ENCODE measurements at regions of chr12 and their contacts with region 1.

Region 1: DNA sequence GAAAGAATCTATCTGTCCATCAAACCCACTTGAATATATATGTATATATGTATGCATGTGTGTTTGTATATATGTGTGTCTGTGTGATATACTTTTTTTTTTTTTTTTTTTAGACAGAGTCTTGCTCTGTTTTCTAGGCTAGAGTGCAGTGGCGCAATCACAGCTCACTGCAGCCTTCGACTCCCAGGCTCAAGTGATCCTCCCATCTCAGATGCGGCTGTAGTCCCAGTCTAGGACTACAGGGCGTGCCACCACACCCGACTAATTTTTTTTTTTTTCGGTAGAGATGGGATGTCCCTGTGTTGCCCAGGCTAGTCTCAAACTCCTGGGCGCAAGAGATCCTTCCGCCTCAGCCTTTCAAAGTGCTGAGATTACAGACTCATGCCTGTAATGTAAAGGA is 13.0 kb upstream of the APOBEC1 start:
- DNase-seq: no peak
- ATAC-seq: no peak
- H3K4me3 ChIP-seq: no peak overlapping the region
- H3K27ac ChIP-seq: no peak overlapping the region
- H3K4me1 ChIP-seq: no peaks in the 10 kb centered on the region
- H3K27me3 ChIP-seq: no peaks in the 10 kb centered on the region
- CTCF ChIP-seq: no peak

Region 2: DNA sequence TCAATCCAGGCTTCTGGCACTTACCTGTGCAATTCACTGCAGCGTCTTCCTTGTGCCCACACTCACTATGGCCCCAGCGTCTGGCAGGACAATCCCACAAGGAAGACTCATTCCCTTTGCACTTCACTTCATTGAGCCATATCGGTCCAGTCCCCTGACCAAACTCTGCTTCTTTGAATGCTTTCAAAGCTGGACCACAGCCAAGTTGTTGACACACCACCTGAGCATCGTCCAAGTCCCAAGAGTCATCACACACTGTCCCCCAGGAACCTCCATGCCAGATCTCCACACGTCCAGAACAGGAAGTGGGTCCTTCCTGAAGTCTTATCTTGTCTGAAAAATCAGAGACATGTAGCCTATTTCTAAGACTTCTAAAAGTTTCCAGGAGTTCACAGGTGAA is 195.4 kb before region 1 on chr12:
- intact Hi-C with region 1: no loop called
- DNase-seq: no peak
- ATAC-seq: no peak
- H3K4me3 ChIP-seq: no peak overlapping the region
- H3K27ac ChIP-seq: no peak overlapping the region
- H3K4me1 ChIP-seq: no peaks in the 10 kb centered on the region
- H3K27me3 ChIP-seq: no peaks in the 10 kb centered on the region
- CTCF ChIP-seq: no peak

Region 3: DNA sequence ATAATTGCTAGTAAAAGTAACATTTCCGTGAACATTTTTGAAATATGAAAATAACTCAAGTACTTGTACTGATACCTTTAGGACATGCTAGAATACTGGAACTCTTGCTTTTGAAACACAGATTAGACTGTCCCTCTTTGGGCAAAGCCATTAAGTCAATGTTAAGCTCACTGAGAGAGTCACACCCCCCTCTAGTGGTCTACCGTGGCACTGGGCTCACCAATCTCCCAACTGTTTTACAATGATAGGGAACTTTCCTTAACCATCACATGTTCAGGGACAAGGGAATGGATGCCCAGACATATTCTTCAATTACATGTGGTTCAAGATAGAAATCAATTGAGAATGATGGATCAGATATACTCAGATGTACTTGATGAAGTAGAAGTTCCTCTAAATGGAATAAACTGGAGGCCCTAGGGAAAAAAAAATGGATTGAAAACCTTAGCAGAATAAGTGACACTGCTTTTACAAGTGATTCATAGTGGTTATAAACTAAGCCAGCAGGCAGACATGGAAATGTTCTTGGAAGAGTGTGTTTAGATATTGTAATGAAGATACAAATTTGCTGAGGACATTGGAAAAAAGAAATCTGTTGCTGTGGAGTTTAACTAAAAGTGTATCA is 128.2 kb after region 1 on chr12:
- intact Hi-C with region 1: loop called in 1 of 3 experiments (anchors 5 kb)
- DNase-seq: peak in 5 of 6 donors; percentile 27 to 82 (median 65)
- ATAC-seq: peak; percentile 89 to 97 (median 94)
- H3K4me3 ChIP-seq: no peak overlapping the region
- H3K27ac ChIP-seq: no peak overlapping the region
- H3K4me1 ChIP-seq: no peaks in the 10 kb centered on the region
- H3K27me3 ChIP-seq: no peaks in the 10 kb centered on the region
- CTCF ChIP-seq: peak; percentile 44 to 93 (median 80)

Region 4: DNA sequence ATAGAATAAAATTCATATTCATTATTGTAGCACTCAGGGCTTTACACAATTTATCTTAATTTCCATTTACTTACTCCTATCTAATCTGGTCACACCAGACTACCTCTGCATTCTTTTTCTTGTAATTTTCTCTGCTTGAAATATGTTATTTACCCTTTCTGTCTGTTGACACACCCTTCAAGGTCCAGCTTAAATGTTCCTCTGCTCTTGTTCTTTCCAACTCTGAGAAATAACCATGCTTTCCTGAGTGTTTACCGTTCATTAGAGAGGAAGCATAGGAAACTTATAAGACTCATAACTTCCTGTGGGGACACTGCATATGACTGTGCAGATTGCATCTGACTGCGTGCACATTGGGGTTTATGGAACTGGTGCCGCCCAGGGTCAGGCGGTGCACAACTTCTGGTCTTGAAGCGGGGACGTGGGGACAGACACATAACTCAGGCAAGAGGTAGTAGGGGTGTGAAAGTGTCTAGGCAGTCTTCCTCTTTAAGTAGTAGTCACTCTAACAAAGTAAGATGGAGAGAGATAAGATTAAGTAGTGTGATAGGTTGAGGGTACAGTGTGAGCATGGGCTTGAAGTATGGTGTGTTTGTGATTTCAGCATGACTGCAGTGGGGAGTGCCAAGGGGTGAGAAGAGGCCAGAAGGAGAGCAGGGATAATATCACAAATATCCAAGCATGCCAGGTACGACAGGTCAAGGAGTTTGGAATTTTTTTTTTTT is 311.3 kb after region 1 on chr12:
- intact Hi-C with region 1: no loop called
- DNase-seq: no peak
- ATAC-seq: peak in 3 of 4 donors; percentile 41 to 85 (median 70)
- H3K4me3 ChIP-seq: no peak overlapping the region
- H3K27ac ChIP-seq: peak overlapping the region in 1 of 4 donors; percentile 41
- H3K4me1 ChIP-seq: no peaks in the 10 kb centered on the region
- H3K27me3 ChIP-seq: no peaks in the 10 kb centered on the region
- CTCF ChIP-seq: no peak

Measured in pancreas (tissue), 10 donors.